HEK293T (cell line): ENCODE measurements at regions of chr11 and their contacts with region 1.

Region 1: GRCh38 chr11:75142714-75143419 is 8.0 kb upstream of the SLCO2B1 start:
- DNase-seq: no peak

Region 2: GRCh38 chr11:75002516-75002915 is 140.4 kb before region 1 on chr11:
- CTCF ChIA-PET with region 1: no interaction called
- POLR2A ChIA-PET with region 1: no interaction called
- DNase-seq: no peak

Region 3: GRCh38 chr11:75103380-75104026 is 39.4 kb before region 1 on chr11:
- CTCF ChIA-PET with region 1: no interaction called
- POLR2A ChIA-PET with region 1: no interaction called
- DNase-seq: no peak

Region 4: GRCh38 chr11:75132080-75132479 is 10.8 kb before region 1 on chr11:
- CTCF ChIA-PET with region 1: interaction called, 12 read pairs
- POLR2A ChIA-PET with region 1: no interaction called
- DNase-seq: no peak

Region 5: DNA sequence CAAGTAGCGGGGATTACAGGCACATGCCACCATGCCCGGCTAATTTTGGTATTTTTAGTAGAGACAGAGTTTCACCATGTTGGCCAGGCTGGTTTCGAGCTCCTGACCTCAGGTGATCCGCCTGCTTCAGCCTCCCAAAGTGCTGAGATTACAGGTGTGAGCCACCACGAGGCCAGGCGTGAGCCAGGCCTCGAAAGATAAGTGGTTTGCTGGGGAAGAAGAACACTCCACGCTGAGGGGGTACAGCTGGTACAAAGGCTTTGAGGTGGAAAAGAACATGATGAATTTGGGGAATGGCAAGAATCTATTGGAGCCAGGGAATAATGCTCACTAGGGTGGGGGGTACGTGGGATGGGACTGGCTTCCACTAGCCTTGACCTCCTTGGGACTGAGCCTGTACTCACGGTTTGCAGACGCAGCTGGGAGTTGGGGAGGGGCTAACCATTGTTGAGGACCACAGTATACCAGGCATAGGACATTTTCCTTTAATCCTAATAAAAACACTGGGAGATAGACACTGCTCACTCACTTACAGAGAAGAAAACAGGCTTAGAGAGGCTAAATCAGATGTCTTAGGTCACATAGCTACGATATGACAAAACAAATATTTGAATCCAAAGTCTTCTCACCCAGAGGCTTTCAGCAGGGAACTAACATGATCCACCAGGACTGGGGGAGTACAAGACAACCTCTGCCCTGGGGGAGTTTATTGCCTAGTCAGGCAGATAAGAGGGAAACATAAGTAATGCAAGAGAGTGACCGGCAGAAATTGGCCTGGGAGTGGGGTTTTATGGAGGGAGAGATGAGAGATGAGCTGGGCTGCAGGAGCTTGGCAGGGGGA is 12.9 kb after region 1 on chr11:
- CTCF ChIA-PET with region 1: interaction called, 12 read pairs
- POLR2A ChIA-PET with region 1: no interaction called
- DNase-seq: no peak

Region 6: GRCh38 chr11:75204685-75205563 is 62.1 kb after region 1 on chr11:
- CTCF ChIA-PET with region 1: interaction called, 174 read pairs
- POLR2A ChIA-PET with region 1: no interaction called
- DNase-seq: peak; percentile 86

Region 7: DNA sequence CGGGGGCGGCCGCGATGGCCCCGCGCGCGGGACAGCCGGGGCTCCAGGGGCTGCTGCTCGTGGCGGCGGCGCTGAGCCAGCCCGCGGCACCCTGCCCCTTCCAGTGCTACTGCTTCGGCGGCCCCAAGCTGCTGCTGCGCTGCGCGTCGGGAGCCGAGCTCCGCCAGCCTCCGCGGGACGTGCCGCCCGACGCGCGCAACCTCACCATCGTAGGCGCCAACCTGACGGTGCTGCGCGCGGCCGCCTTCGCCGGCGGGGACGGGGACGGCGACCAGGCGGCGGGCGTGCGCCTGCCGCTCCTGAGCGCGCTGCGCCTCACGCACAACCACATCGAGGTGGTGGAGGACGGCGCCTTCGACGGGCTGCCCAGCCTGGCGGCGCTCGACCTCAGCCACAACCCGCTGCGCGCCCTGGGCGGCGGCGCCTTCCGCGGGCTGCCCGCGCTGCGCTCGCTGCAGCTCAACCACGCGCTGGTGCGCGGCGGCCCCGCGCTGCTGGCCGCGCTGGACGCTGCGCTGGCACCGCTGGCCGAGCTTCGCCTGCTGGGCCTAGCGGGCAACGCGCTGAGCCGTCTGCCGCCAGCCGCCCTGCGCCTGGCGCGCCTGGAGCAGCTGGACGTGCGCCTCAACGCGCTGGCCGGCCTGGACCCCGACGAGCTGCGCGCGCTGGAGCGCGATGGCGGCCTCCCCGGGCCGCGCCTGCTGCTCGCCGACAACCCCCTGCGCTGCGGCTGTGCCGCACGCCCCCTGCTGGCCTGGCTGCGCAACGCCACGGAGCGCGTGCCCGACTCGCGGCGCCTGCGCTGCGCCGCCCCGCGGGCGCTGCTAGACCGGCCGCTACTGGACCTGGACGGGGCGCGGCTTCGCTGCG is 98.4 kb after region 1 on chr11:
- CTCF ChIA-PET with region 1: interaction called, 45 read pairs
- POLR2A ChIA-PET with region 1: interaction called, 4 read pairs
- DNase-seq: peak; percentile 96

Region 8: GRCh38 chr11:75248690-75249268 is 105.9 kb after region 1 on chr11:
- CTCF ChIA-PET with region 1: interaction called, 95 read pairs
- POLR2A ChIA-PET with region 1: no interaction called
- DNase-seq: peak; percentile 86

Region 9: GRCh38 chr11:77053217-77054015 is 1910.5 kb after region 1 on chr11:
- CTCF ChIA-PET with region 1: no interaction called
- POLR2A ChIA-PET with region 1: no interaction called
- DNase-seq: no peak